Thyroid gland (tissue), 4 donors: ENCODE measurements at regions of chr2 and their contacts with region 1.

Region 1: GRCh38 chr2:35408320-35408719 is 947.3 kb upstream of the CRIM1 start:
- DNase-seq: no peak
- H3K4me3 ChIP-seq: no peak overlapping the region
- H3K27ac ChIP-seq: no peak overlapping the region
- H3K4me1 ChIP-seq: no peaks in the 10 kb centered on the region
- H3K27me3 ChIP-seq: no peaks in the 10 kb centered on the region
- CTCF ChIP-seq: no peak
- POLR2A ChIP-seq: no peak

Region 2: GRCh38 chr2:34096562-34097171 is 1311.7 kb before region 1 on chr2:
- intact Hi-C with region 1: loop called (anchors 5 kb)
- DNase-seq: peak; percentile 35 to 51
- H3K4me3 ChIP-seq: no peak overlapping the region
- H3K27ac ChIP-seq: no peak overlapping the region
- H3K4me1 ChIP-seq: no peaks in the 10 kb centered on the region
- H3K27me3 ChIP-seq: no peaks in the 10 kb centered on the region
- CTCF ChIP-seq: peak; percentile 41 to 76 (median 70)
- POLR2A ChIP-seq: no peak